Activated naive CD4-positive, alpha-beta T cell treated with anti-CD3 and anti-CD28 coated beads for 36 hours (primary cell): ENCODE measurements at regions of chr2 and their contacts with region 1.

Region 1: DNA sequence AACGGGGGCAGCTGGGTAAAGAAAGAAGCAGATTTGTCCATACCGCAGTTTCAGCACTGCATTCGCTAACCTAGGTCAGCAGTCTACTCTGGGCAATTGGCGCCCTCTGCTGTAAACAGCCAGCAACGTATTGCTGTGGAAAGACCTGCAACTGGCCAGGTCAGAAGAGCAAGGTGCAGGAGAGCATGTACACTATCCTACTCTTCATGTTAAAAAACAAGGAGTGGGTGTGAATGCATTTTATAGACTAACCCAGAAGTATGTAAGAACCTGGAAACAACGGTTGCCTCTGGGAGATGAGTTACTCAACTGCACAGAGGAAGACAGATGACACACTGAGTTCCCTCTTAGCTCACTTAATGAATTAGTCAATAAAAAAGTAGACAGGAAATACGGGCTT is 6.2 kb downstream of the MRPS5 start:
- DNase-seq: peak; percentile 88
- H3K4me3 Mint-ChIP-seq: no peak overlapping the region
- H3K27ac Mint-ChIP-seq: no peak overlapping the region
- H3K4me1 Mint-ChIP-seq: peaks cover 35% of the 10 kb centered on the region
- H3K27me3 Mint-ChIP-seq: no peaks in the 10 kb centered on the region

Region 2: GRCh38 chr2:94874277-94875008 is 241.0 kb before region 1 on chr2:
- CTCF ChIA-PET with region 1: no interaction called
- intact Hi-C with region 1: loop called (anchors 1 kb)
- DNase-seq: peak; percentile 75
- H3K4me3 Mint-ChIP-seq: no peak overlapping the region
- H3K27ac Mint-ChIP-seq: no peak overlapping the region
- H3K4me1 Mint-ChIP-seq: no peaks in the 10 kb centered on the region
- H3K27me3 Mint-ChIP-seq: peaks cover 15% of the 10 kb centered on the region

Region 3: GRCh38 chr2:94986392-94986963 is 128.9 kb before region 1 on chr2:
- CTCF ChIA-PET with region 1: interaction called, 14 read pairs
- intact Hi-C with region 1: loop called (anchors 1 kb)
- DNase-seq: peak; percentile 64
- H3K4me3 Mint-ChIP-seq: no peak overlapping the region
- H3K27ac Mint-ChIP-seq: no peak overlapping the region
- H3K4me1 Mint-ChIP-seq: no peaks in the 10 kb centered on the region
- H3K27me3 Mint-ChIP-seq: peaks cover 12% of the 10 kb centered on the region

Region 4: GRCh38 chr2:95165129-95166064 is 50.0 kb after region 1 on chr2 and contains the start of gene ZNF2:
- CTCF ChIA-PET with region 1: interaction called, 10 read pairs
- intact Hi-C with region 1: no loop called
- DNase-seq: peak; percentile 99
- H3K4me3 Mint-ChIP-seq: peak within 1 kb of the TSS; percentile 99
- H3K27ac Mint-ChIP-seq: peak within 1 kb of the TSS; percentile 89
- H3K4me1 Mint-ChIP-seq: peaks cover 22% of the 10 kb centered on the region
- H3K27me3 Mint-ChIP-seq: no peaks in the 10 kb centered on the region
- total RNA-seq, gene ZNF2: 2.6 to 3.1 TPM

Region 5: DNA sequence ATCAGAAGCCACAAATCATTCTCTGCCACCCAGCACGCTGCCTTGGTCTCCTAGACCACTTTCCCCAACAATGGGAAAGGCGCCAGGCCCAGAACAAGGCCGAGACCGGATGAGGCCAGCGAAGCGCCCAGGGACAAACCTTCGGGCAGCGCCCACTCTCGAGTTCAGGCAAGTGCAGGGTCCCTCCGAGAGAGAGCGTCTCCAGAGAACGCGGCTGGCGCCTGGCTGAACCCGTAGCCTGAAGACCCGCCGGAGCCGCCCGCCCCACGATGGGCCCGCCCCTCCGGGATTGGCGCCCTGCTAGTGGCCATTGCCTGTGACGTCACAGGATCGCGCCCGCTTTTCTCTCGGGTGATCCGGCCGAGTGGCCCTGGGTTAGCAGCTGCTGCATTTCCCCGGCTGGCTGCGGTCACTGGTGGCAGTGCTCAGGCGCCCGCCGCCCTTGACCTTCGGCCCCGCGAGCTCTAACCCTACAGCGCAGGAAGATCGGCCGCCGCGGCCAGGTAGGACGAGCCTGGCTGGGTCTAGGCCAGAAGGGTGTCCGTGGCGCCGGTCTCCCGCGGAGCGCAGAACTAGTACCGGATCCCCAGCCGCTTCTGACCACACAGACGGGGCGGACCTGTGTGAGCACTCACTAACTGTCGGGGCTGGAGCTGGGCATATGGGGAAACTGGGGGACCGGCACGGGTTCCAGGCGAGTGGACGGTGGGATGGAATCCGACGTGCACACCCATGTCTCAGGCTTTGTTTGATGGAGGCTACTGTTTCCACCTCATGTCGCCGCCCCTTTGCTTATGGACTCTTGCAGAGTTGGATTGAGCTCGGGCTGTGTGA is 287.2 kb after region 1 on chr2 and contains the start of gene FAHD2A:
- CTCF ChIA-PET with region 1: no interaction called
- intact Hi-C with region 1: no loop called
- DNase-seq: peak; percentile 98
- H3K4me3 Mint-ChIP-seq: peak within 1 kb of the TSS; percentile 95
- H3K27ac Mint-ChIP-seq: peak within 1 kb of the TSS; percentile 86
- H3K4me1 Mint-ChIP-seq: peaks cover 18% of the 10 kb centered on the region
- H3K27me3 Mint-ChIP-seq: no peaks in the 10 kb centered on the region
- total RNA-seq, gene FAHD2A: 49.3 to 50.7 TPM